Activated B cell treated with CpG ODN at 0.5 μM for 24 hours (primary cell): ENCODE measurements at regions of chr16 and their contacts with region 1.

Region 1: DNA sequence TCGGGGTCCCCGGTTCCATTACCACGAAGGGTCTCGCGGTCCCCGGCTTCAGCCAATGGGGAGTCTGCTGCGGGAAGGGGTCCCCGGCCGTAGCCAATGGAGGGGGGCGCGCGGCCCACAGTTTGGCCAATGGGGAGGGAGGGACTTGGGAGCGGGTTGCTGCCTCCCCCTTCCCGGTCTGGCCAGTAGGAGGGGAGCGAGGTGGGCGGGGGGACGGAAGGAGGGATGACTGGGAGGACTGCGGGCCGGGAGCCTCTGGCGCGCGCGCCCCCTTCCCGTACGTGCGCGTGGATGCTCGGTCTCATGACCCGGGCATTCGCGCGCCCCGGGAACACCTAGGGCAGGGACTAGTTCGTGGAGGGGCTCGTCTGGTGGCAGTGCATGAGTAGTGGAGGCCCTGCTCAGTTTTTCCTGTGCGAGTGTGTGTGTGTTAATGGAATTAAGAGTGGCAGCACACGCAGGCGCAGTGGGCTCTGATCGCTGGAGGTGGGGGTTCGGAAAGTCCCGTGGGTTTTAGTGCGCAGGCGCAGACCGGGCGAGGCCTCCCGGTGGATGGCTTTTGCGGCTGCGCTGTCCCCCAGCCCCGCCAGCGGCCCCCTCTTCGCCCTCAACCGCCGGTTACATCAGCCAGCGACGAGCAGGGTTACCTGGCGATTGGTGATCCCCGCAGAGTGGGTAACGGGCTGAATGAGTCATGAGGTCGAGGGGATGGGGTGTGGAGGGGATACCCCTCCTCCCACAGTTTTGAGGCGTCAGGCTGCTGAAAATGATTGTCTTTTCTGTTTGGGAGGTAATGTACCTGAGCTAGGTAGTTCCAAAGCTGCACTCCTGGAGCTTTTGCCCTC is 1.3 kb downstream of the ATXN2L start:
- DNase-seq: peak; percentile 92
- ATAC-seq: peak; percentile 77
- H3K4me3 Mint-ChIP-seq: peak overlapping the region; percentile 98
- H3K27ac Mint-ChIP-seq: peak overlapping the region; percentile 99
- H3K4me1 Mint-ChIP-seq: peaks cover 43% of the 10 kb centered on the region
- H3K27me3 Mint-ChIP-seq: no peaks in the 10 kb centered on the region
- CTCF ChIP-seq: no peak

Region 2: DNA sequence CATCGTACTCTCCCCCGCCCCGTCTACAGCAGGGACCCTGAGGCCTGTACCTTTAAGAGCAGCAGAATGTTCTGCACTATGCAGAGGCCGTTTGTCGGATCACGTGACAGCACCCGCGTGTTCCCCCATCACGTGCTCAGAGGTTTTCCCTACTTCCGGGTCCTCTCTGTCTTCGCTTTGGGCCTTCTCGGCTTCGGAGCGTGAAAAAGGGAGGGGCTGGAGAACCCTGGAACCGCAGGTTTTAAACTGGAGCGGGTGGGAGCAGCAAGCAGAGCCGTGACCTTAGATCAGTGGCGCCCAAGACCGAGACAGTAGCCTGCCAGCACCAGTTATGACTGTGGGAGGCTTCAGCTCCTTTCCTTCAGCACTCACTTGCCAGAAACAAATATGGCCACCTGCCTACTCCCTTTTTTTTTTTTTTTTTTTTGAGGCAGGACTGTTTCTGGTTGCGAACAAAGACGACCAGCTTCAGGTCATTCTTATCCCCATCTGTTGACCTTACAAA is 332.1 kb before region 1 on chr16 and contains the start of gene CLN3:
- CTCF ChIA-PET with region 1: no interaction called
- POLR2A ChIA-PET with region 1: interaction called, 10 read pairs
- intact Hi-C with region 1: loop called (anchors 5 kb)
- DNase-seq: peak; percentile 80
- ATAC-seq: peak; percentile 72
- H3K4me3 Mint-ChIP-seq: peak within 1 kb of the TSS; percentile 96
- H3K27ac Mint-ChIP-seq: peak within 1 kb of the TSS; percentile 100
- H3K4me1 Mint-ChIP-seq: peaks cover 48% of the 10 kb centered on the region
- H3K27me3 Mint-ChIP-seq: no peaks in the 10 kb centered on the region
- CTCF ChIP-seq: no peak
- total RNA-seq, gene CLN3: 27.9 and 32.0 TPM in 2 replicates

Region 3: DNA sequence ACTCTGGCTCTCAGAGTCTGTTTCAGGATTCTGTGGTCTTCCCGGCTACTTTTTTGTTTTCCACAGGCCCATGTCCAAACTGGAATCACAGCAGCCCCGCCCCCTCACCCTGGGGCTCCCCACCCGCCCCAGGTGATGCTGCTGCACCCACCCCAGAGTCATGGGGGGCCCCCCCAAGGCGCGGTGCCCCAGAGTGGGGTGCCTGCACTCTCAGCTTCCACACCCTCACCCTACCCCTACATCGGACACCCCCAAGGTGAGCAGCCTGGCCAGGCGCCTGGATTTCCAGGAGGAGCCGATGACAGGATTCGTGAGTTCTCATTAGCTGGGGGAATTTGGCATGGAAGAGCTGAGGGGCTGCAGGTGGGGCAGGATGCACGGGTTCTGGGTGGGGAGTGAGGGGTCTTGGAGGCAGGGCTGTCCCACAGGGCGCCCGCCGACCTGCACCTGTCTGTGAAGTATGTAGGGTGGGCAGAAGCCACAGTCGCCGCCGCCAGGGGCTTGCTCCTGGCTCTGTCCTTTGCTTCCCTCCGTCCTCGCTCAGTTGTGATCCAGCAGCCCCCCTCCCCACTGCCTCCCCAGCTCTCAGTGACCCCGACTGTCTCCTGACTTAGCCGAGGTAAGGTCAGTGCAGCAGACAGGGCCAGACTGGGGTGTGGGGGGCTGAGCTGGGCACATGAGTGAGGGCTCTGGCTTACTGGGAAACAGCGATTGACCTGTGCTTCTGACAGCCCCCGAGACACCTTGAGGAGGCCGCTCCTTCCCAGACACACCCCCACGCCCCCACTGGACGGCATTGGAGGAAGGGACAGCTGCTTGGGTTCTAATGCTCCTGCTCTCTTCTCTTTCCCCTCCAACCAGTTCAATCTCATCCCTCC is 12.0 kb after region 1 on chr16:
- CTCF ChIA-PET with region 1: no interaction called
- POLR2A ChIA-PET with region 1: interaction called, 10 read pairs
- intact Hi-C with region 1: no loop called
- DNase-seq: no peak
- ATAC-seq: no peak
- H3K4me3 Mint-ChIP-seq: no peak overlapping the region
- H3K27ac Mint-ChIP-seq: peak overlapping the region; percentile 24
- H3K4me1 Mint-ChIP-seq: peaks cover 7% of the 10 kb centered on the region
- H3K27me3 Mint-ChIP-seq: no peaks in the 10 kb centered on the region
- CTCF ChIP-seq: no peak

Region 4: GRCh38 chr16:28863929-28864793 is 40.1 kb after region 1 on chr16:
- CTCF ChIA-PET with region 1: no interaction called
- POLR2A ChIA-PET with region 1: interaction called, 60 read pairs
- intact Hi-C with region 1: loop called (anchors 1 kb)
- DNase-seq: no peak
- ATAC-seq: no peak
- H3K4me3 Mint-ChIP-seq: peak overlapping the region; percentile 98
- H3K27ac Mint-ChIP-seq: peak overlapping the region; percentile 98
- H3K4me1 Mint-ChIP-seq: peaks cover 24% of the 10 kb centered on the region
- H3K27me3 Mint-ChIP-seq: no peaks in the 10 kb centered on the region
- CTCF ChIP-seq: no peak

Region 5: GRCh38 chr16:28935924-28936783 is 112.1 kb after region 1 on chr16:
- CTCF ChIA-PET with region 1: no interaction called
- POLR2A ChIA-PET with region 1: interaction called, 44 read pairs
- intact Hi-C with region 1: no loop called
- DNase-seq: peak; percentile 74
- ATAC-seq: peak; percentile 92
- H3K4me3 Mint-ChIP-seq: peak overlapping the region; percentile 67
- H3K27ac Mint-ChIP-seq: peak overlapping the region; percentile 77
- H3K4me1 Mint-ChIP-seq: peaks cover 59% of the 10 kb centered on the region
- H3K27me3 Mint-ChIP-seq: no peaks in the 10 kb centered on the region
- CTCF ChIP-seq: no peak

Region 6: GRCh38 chr16:28950648-28951409 is 126.7 kb after region 1 on chr16 and contains the start of gene NFATC2IP:
- CTCF ChIA-PET with region 1: no interaction called
- POLR2A ChIA-PET with region 1: interaction called, 21 read pairs
- intact Hi-C with region 1: loop called (anchors 1 kb)
- DNase-seq: peak; percentile 98
- ATAC-seq: peak; percentile 95
- H3K4me3 Mint-ChIP-seq: peak within 1 kb of the TSS; percentile 91
- H3K27ac Mint-ChIP-seq: peak within 1 kb of the TSS; percentile 81
- H3K4me1 Mint-ChIP-seq: peaks cover 25% of the 10 kb centered on the region
- H3K27me3 Mint-ChIP-seq: no peaks in the 10 kb centered on the region
- CTCF ChIP-seq: no peak
- total RNA-seq, gene NFATC2IP: 62.9 and 85.7 TPM in 2 replicates

Region 7: GRCh38 chr16:29995911-29996772 is 1172.0 kb after region 1 on chr16 and contains the start of gene INO80E:
- CTCF ChIA-PET with region 1: no interaction called
- POLR2A ChIA-PET with region 1: no interaction called
- intact Hi-C with region 1: loop called (anchors 5 kb)
- DNase-seq: peak; percentile 100
- ATAC-seq: peak; percentile 96
- H3K4me3 Mint-ChIP-seq: peak within 1 kb of the TSS; percentile 98
- H3K27ac Mint-ChIP-seq: peak within 1 kb of the TSS; percentile 97
- H3K4me1 Mint-ChIP-seq: peaks cover 29% of the 10 kb centered on the region
- H3K27me3 Mint-ChIP-seq: no peaks in the 10 kb centered on the region
- CTCF ChIP-seq: no peak
- total RNA-seq, gene INO80E: 83.5 and 93.6 TPM in 2 replicates